Panc1 (cell line): ENCODE measurements at regions of chr13 and their contacts with region 1.

Region 1: DNA sequence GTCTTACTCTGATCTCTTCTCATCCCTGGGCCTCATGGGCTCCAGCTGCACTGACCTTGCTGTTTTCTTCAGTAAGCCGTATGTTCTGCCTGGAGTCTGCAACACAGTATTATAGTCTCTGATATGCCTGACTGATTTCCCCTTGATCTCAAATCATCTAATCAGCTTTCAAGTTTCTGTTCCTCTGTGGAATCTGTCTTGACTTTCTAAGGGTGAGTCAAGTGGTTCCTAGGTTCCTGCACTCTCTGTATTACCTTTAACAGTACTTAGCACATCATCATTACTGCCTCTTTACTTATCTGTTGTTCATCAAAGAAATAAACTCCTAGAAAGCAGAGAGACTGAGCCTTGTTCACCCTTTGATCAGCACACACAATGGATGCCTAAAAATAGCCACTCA is 350.7 kb downstream of the LMO7 start:
- DNase-seq: no peak
- ATAC-seq: no peak
- H3K4me3 ChIP-seq: no peak overlapping the region
- H3K27ac ChIP-seq: no peak overlapping the region
- H3K4me1 ChIP-seq: no peaks in the 10 kb centered on the region
- H3K27me3 ChIP-seq: no peaks in the 10 kb centered on the region
- CTCF ChIP-seq: no peak

Region 2: DNA sequence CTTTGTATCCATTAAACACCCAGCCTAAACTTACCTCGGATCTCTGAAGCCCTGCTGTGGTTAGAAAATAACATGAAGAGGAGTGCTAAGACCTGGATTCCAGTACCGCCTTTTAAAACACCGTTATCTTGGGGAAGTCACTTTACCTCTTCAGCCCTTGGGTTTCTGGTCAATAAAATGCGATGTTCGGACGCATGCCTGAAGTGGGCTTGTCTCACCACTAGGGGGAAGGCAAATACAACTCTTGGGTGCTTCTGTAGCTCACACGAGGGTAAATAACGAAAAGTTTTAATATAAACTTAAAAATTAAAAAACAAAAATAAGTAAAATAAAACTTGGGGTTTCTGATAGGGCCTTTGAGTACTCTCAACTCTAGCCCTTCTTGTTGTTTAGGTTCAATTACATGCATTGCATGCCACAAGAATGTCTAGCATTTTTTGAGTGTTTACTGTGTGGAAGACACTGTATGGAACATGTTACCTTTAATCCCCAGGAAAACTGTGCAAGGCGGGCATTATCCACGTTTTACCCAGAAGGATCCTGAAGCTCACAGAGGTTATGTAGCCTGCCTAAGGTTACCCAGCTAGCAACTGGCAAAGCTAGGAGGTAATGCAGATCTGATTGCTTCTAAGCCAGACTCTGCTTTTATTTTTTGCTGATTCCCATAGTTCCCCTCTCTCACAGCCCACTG is 110.3 kb before region 1 on chr13:
- CTCF ChIA-PET with region 1: no interaction called
- POLR2A ChIA-PET with region 1: no interaction called
- in situ Hi-C with region 1: no loop called
- intact Hi-C with region 1: no loop called
- DNase-seq: peak; percentile 45
- ATAC-seq: peak; percentile 94
- H3K4me3 ChIP-seq: no peak overlapping the region
- H3K27ac ChIP-seq: no peak overlapping the region
- H3K4me1 ChIP-seq: peaks cover 5% of the 10 kb centered on the region; the same call in 1 of the 2 replicates
- H3K27me3 ChIP-seq: no peaks in the 10 kb centered on the region
- CTCF ChIP-seq: peak; percentile 84

Region 3: DNA sequence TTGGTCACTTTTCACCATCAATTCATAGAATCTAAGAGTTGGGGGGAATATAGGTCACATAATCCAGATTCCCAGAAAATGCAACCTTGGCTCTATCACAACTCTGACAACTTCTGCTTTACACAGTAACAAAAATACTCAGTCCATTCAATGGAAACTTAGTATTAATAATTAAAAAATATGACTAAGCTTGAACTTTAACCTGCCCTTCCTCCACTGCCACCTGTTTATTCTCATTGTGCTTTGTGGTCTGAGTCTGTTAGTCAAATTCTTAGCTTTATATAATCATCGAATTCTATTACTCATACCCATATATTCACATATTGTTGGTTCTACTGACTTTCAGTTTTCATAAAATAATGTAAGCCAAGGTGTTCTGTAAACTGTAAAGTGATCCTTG is 22.7 kb after region 1 on chr13:
- CTCF ChIA-PET with region 1: no interaction called
- POLR2A ChIA-PET with region 1: no interaction called
- in situ Hi-C with region 1: no loop called
- intact Hi-C with region 1: loop called (anchors 1 kb)
- DNase-seq: no peak
- ATAC-seq: no peak
- H3K4me3 ChIP-seq: no peak overlapping the region
- H3K27ac ChIP-seq: no peak overlapping the region
- H3K4me1 ChIP-seq: no peaks in the 10 kb centered on the region
- H3K27me3 ChIP-seq: no peaks in the 10 kb centered on the region
- CTCF ChIP-seq: no peak